CD4-positive, alpha-beta memory T cell (primary cell): ENCODE measurements at regions of chr6 and their contacts with region 1.

Region 1: DNA sequence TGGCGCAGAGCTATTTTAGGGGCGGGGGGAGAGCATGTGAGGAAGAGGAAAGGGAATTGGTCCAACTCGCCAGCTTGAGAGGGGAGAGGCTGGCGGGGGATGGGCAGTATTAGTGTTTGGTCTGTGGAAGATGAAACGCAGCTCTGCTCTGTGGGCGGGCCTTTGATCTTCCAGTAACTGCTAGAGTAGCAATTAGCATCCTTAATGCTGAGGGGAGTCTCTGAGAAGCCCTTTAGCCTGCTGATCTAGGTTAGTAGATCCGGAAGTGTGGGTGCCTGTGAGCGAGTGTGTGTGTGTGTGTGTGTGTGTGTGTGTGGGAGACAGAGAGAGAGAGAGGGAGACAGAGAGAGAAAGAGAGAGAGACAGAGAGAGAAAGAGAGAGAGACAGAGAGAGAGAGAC is 117.2 kb upstream of the BACH2 start:
- DNase-seq: peak; percentile 80 to 91 (median 86)
- H3K4me3 ChIP-seq: peak overlapping the region; percentile 25 to 30
- H3K4me3 Mint-ChIP-seq: peak overlapping the region; percentile 79 to 93 (median 84)
- H3K27ac ChIP-seq: peak overlapping the region; percentile 34
- H3K27ac Mint-ChIP-seq: peak overlapping the region; percentile 88 to 100 (median 96)
- H3K4me1 ChIP-seq: peaks cover 38% of the 10 kb centered on the region
- H3K4me1 Mint-ChIP-seq: peaks cover 31 to 62% (median 44%) of the 10 kb centered on the region in 4 donors
- H3K27me3 ChIP-seq: no peaks in the 10 kb centered on the region
- H3K27me3 Mint-ChIP-seq: peaks cover 2% of the 10 kb centered on the region in 2 donors

Region 2: DNA sequence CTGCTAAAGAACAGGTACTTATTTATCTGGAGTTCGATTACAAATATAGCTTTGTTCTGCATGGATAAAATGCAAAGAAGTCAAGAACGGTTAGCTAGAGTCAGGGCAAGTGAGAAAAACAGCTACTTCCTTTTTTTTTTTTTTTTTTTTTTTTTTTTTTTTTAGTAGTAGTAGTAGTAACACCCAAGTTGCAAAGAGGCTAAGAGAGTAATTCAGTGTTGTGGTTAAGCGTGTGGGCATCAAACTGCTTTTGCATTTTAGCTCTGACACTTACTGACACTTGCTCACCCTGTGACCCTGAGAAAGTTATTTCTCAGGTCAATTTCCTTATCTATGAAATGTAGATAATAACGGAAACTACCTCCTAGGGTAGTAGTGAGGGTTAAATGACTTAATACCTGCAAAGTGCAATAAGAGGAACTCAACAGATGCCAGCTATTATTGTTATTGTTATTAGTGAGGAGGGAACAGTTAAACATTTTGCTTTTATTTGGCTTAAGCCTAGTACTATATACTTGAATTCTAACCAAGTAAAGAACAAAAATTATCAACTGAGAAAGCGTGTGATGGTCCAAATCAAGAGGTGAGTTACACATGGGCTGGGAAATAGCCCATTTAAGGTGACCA is 30.6 kb before region 1 on chr6:
- CTCF ChIA-PET with region 1: no interaction called
- POLR2A ChIA-PET with region 1: no interaction called
- intact Hi-C with region 1: no loop called
- DNase-seq: peak in 3 of 5 donors; percentile 10 to 32 (median 17)
- H3K4me3 ChIP-seq: no peak overlapping the region
- H3K4me3 Mint-ChIP-seq: peak overlapping the region in 1 of 8 donors; percentile 19
- H3K27ac ChIP-seq: no peak overlapping the region
- H3K27ac Mint-ChIP-seq: peak overlapping the region in 1 of 7 donors; percentile 41
- H3K4me1 ChIP-seq: peaks cover 6% of the 10 kb centered on the region
- H3K4me1 Mint-ChIP-seq: peaks cover 4 to 19% (median 11%) of the 10 kb centered on the region in 4 donors
- H3K27me3 ChIP-seq: peaks cover 4% of the 10 kb centered on the region
- H3K27me3 Mint-ChIP-seq: peaks cover 2 to 6% of the 10 kb centered on the region in 2 donors

Region 3: GRCh38 chr6:90425161-90425641 is 11.3 kb after region 1 on chr6:
- CTCF ChIA-PET with region 1: interaction called, 34 read pairs
- POLR2A ChIA-PET with region 1: interaction called, 82 read pairs
- intact Hi-C with region 1: no loop called
- DNase-seq: peak; percentile 29 to 58 (median 49)
- H3K4me3 ChIP-seq: peak overlapping the region in 1 of 2 donors; percentile 36
- H3K4me3 Mint-ChIP-seq: peak overlapping the region; percentile 63 to 88 (median 82)
- H3K27ac ChIP-seq: peak overlapping the region; percentile 50
- H3K27ac Mint-ChIP-seq: peak overlapping the region; percentile 58 to 95 (median 91)
- H3K4me1 ChIP-seq: peaks cover 20% of the 10 kb centered on the region
- H3K4me1 Mint-ChIP-seq: peaks cover 13 to 19% (median 16%) of the 10 kb centered on the region in 4 donors
- H3K27me3 ChIP-seq: no peaks in the 10 kb centered on the region
- H3K27me3 Mint-ChIP-seq: no peaks in the 10 kb centered on the region